ENCODE measurements at regions of chr7 and their contacts with region 1.

Region 1: DNA sequence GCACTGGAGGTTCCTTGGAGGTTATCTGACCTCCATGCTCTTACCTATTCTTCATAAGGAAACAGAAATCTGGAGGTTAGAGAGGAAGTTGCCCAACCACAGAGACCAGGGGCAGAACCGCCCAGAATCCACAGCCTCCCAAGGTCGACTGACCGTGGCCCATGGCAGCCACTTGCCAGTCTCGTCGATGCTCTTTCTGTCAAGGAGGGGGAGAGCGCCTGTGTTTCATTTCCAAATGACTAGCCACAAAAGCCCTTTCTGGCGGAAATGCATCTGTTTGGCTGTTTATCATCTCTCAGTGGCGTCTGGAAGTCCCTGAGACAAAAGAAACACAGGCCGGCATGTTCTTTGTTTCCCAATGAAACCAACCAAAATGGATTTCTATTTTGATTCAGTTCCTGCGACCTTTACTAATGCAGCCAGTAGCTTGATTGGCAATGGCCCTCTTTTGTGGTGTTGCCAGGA is 2.9 kb downstream of the RAMP3 start:
- DNase-seq: no peak
- H3K4me3 ChIP-seq: no peak overlapping the region
- H3K27ac ChIP-seq: no peak overlapping the region
- H3K4me1 ChIP-seq: no peaks in the 10 kb centered on the region
- H3K27me3 ChIP-seq: peaks cover 75% of the 10 kb centered on the region
- CTCF ChIP-seq: no peak

Region 2: GRCh38 chr7:45679516-45679915 is 519.1 kb after region 1 on chr7:
- CTCF ChIA-PET with region 1: no interaction called
- POLR2A ChIA-PET with region 1: no interaction called
- intact Hi-C with region 1: loop called (anchors 10 kb)
- DNase-seq: no peak
- H3K4me3 ChIP-seq: no peak overlapping the region
- H3K27ac ChIP-seq: no peak overlapping the region
- H3K4me1 ChIP-seq: no peaks in the 10 kb centered on the region
- H3K27me3 ChIP-seq: peaks cover 78% of the 10 kb centered on the region
- CTCF ChIP-seq: no peak

Measured in PC-9 (cell line).